Posterior vena cava (tissue), 2 donors: ENCODE measurements at regions of chr3 and their contacts with region 1.

Region 1: GRCh38 chr3:119856695-119857094 is 74.8 kb downstream of the NR1I2 start:
- DNase-seq: no peak

Region 2: GRCh38 chr3:119810018-119810435 is 46.7 kb before region 1 on chr3:
- intact Hi-C with region 1: no loop called
- DNase-seq: peak; percentile 82

Region 3: GRCh38 chr3:119912220-119912619 is 55.5 kb after region 1 on chr3:
- intact Hi-C with region 1: loop called in 1 of 2 experiments (anchors 2 kb)
- DNase-seq: no peak